Mammary epithelial cell (primary cell): ENCODE measurements at regions of chr7 and their contacts with region 1.

Region 1: DNA sequence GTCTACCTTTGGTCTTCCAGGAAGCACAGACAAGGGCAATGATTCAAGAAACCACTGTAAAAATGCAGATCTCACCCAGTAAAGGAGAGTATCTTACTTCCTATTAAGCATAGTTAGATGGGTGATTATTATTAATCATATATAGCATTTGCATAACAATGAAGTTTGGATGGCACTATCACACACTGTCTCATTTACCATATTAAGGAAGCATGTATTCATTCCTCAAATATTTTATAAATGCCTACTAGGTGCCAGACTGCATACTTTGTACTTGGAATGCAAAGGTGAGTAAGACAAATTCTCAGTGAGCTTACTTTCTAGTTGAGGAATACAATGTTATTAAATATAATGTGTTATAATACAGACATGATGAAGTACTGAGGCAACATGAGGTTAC is 53.9 kb upstream of the SKAP2 start:
- DNase-seq: peak; percentile 58
- H3K4me3 ChIP-seq: no peak overlapping the region
- H3K27ac ChIP-seq: peak overlapping the region; percentile 44
- H3K4me1 ChIP-seq: peaks cover 33% of the 10 kb centered on the region
- H3K27me3 ChIP-seq: no peaks in the 10 kb centered on the region
- CTCF ChIP-seq: no peak

Region 2: DNA sequence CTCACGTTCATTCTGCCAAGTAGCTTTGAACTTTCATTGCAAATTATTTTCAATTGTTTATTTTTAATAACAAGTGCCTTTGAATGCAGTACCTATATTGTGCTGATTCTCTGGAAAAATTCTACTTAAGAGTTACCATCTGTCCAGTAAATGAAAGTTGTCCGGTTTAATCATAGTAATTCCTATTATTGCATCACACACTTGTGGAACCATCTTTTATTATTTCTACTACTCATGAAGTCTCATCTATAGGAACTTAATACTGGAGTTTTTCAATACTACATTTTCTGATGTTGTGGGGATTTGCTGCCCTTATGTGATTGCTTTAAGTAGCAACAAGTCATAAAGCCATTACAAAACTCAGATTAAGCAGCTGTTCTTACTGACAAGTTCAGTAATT is 37.4 kb before region 1 on chr7:
- CTCF ChIA-PET with region 1: no interaction called
- dilution Hi-C with region 1: no loop called
- in situ Hi-C with region 1: no loop called
- intact Hi-C with region 1: no loop called
- DNase-seq: no peak
- H3K4me3 ChIP-seq: no peak overlapping the region
- H3K27ac ChIP-seq: no peak overlapping the region
- H3K4me1 ChIP-seq: no peaks in the 10 kb centered on the region
- H3K27me3 ChIP-seq: no peaks in the 10 kb centered on the region
- CTCF ChIP-seq: no peak

Region 3: GRCh38 chr7:26948617-26949118 is 30.4 kb after region 1 on chr7:
- CTCF ChIA-PET with region 1: no interaction called
- dilution Hi-C with region 1: no loop called
- in situ Hi-C with region 1: no loop called
- intact Hi-C with region 1: loop called (anchors 1 kb)
- DNase-seq: peak; percentile 91
- H3K4me3 ChIP-seq: peak overlapping the region in 1 of 3 experiments; percentile 8
- H3K27ac ChIP-seq: peak overlapping the region; percentile 75
- H3K4me1 ChIP-seq: peaks cover 16% of the 10 kb centered on the region
- H3K27me3 ChIP-seq: no peaks in the 10 kb centered on the region
- CTCF ChIP-seq: no peak

Region 4: DNA sequence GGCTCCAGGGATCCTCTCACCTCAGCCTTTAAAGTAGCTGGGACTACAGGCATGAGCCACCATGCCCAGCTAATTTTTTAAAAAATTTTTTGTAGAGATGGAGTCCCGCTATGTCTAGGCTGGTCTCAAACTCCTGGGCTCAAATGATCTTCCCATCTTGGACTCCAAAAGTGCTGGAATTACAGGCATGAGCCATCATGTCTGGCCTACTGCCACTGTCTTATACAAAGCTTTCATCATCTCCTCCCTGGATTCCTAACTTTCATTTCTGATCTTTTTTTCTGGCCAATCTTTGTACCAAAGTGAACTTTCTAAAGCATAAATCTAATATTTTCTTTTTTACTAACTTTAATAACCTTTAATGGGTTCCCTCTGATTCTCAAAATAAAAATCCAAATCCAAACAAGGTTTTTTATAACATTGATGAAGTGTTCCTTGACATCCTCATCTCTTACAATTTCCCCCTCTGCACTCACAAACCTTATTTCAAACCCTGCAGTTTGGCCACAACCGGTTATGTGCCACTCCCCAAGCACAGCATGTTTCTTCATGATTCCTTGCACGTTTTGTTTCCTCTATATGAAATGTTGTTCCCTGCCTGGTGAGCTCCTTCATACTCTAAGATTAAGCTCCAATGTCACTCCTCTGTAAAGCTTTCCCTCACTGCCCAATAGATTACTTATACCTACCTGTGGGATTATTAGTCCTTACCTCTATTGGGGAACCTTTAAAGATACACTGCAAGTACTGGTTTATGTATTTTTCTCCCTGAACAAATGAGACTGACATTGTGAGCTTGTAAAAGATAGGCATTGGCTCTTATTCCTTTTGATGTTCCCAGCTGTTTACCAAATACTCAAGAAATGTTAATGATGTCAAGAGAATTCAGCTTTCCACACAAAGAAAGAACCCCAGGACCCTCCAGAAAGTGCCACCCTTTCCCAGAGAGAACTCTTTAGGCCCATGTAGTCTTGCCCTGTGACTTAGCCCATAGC is 75.9 kb after region 1 on chr7:
- CTCF ChIA-PET with region 1: no interaction called
- dilution Hi-C with region 1: no loop called
- in situ Hi-C with region 1: no loop called
- intact Hi-C with region 1: loop called (anchors 5 kb)
- DNase-seq: peak; percentile 47
- H3K4me3 ChIP-seq: no peak overlapping the region
- H3K27ac ChIP-seq: peak overlapping the region; percentile 61
- H3K4me1 ChIP-seq: peaks cover 34% of the 10 kb centered on the region
- H3K27me3 ChIP-seq: no peaks in the 10 kb centered on the region
- CTCF ChIP-seq: no peak

Region 5: DNA sequence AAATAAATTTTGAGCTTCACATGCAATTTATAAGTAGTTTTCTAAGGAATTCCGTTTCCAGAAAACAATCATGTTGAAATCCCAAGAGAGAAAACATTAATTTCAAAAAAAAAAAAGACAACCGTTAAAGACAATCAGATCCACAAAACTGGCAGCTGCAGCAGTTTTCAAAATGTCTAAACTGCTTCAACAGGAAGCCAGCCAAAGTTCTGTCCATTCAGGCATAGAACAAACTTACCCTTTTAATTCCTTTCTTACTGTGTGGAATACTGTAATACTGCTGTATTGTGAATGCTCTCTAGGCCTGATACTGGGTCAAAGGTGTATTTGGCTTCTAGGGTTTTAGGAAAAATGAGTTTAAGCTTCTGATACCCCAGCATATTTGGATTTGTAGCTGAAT is 145.9 kb after region 1 on chr7:
- CTCF ChIA-PET with region 1: no interaction called
- dilution Hi-C with region 1: no loop called
- in situ Hi-C with region 1: no loop called
- intact Hi-C with region 1: no loop called
- DNase-seq: no peak
- H3K4me3 ChIP-seq: no peak overlapping the region
- H3K27ac ChIP-seq: no peak overlapping the region
- H3K4me1 ChIP-seq: peaks cover 9% of the 10 kb centered on the region
- H3K27me3 ChIP-seq: no peaks in the 10 kb centered on the region
- CTCF ChIP-seq: no peak